PC-3 (cell line): ENCODE measurements at regions of chr21 and their contacts with region 1.

Region 1: DNA sequence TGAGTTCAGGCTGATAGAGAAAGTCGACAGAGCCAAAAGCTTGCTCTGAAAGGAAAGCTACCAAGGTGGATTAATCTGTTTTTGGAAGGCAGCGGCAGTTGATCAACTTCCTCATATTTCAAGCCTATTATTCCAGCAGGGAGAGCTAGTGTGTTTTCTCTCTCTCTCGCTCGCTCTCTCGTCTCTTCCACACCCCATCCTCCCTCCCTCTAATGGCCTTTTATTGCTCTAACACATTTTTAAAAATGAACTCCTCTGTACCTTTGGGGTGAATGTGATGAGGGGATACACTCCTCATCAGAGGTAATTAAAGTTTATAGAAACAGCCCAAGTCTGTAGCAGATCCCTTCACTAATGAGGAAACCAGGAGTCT is 126.4 kb downstream of the CLIC6 start:
- DNase-seq: no peak
- ATAC-seq: peak; percentile 4; the same call in 1 of the 2 replicates
- H3K4me3 ChIP-seq: no peak overlapping the region
- H3K27ac ChIP-seq: peak overlapping the region; percentile 89
- H3K4me1 ChIP-seq: peaks cover 46% of the 10 kb centered on the region
- H3K27me3 ChIP-seq: no peaks in the 10 kb centered on the region
- CTCF ChIP-seq: peak; percentile 39

Region 2: GRCh38 chr21:34693192-34693810 is 101.9 kb before region 1 on chr21:
- CTCF ChIA-PET with region 1: no interaction called
- POLR2A ChIA-PET with region 1: interaction called, 3 read pairs
- intact Hi-C with region 1: loop called (anchors 2 kb)
- DNase-seq: peak; percentile 83
- ATAC-seq: peak; percentile 65
- H3K4me3 ChIP-seq: no peak overlapping the region
- H3K27ac ChIP-seq: no peak overlapping the region
- H3K4me1 ChIP-seq: peaks cover 38% of the 10 kb centered on the region
- H3K27me3 ChIP-seq: no peaks in the 10 kb centered on the region
- CTCF ChIP-seq: peak; percentile 93

Region 3: GRCh38 chr21:34726627-34727337 is 68.4 kb before region 1 on chr21:
- CTCF ChIA-PET with region 1: no interaction called
- POLR2A ChIA-PET with region 1: no interaction called
- intact Hi-C with region 1: no loop called
- DNase-seq: peak; percentile 45
- ATAC-seq: no peak
- H3K4me3 ChIP-seq: no peak overlapping the region
- H3K27ac ChIP-seq: no peak overlapping the region
- H3K4me1 ChIP-seq: peaks cover 9% of the 10 kb centered on the region; the same call in 1 of the 2 replicates
- H3K27me3 ChIP-seq: no peaks in the 10 kb centered on the region
- CTCF ChIP-seq: no peak

Region 4: DNA sequence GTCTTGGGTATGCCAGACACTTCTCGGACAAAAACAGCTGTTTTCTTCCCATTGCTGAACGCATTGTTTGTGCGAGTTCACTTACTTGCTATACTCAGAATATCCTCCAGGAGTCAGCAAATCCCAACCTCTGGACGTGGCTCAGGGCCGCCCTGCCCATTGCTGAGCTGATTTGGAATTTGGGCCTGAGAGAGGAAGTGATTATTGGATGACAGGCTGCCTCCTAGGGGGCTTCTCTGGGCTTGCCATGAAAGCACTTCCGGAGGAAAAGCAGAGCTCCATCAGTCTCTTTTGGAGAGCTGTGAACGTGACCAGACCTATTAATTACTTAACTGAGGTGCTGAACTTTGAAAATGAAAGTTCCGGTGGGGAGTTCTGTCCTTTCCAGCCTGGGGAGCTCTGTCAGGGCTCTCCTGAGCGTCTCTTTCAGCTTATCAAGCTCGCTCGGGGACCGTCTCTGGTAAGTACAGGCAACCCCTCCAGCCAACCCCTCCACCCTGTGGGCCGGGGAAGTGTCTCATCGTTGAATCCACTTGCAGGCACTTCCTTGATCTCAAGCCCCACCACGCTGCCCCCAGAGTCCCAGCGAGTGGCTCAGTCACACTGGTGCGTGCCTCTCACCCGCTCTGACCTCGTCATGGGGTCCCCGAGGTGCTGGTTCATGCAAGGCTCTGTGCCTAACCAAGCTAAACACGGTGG is 49.5 kb before region 1 on chr21:
- CTCF ChIA-PET with region 1: interaction called, 23 read pairs
- POLR2A ChIA-PET with region 1: interaction called, 6 read pairs
- intact Hi-C with region 1: loop called (anchors 1 kb)
- DNase-seq: peak; percentile 93
- ATAC-seq: peak; percentile 68
- H3K4me3 ChIP-seq: no peak overlapping the region
- H3K27ac ChIP-seq: no peak overlapping the region
- H3K4me1 ChIP-seq: peaks cover 31% of the 10 kb centered on the region
- H3K27me3 ChIP-seq: no peaks in the 10 kb centered on the region
- CTCF ChIP-seq: peak; percentile 97

Region 5: DNA sequence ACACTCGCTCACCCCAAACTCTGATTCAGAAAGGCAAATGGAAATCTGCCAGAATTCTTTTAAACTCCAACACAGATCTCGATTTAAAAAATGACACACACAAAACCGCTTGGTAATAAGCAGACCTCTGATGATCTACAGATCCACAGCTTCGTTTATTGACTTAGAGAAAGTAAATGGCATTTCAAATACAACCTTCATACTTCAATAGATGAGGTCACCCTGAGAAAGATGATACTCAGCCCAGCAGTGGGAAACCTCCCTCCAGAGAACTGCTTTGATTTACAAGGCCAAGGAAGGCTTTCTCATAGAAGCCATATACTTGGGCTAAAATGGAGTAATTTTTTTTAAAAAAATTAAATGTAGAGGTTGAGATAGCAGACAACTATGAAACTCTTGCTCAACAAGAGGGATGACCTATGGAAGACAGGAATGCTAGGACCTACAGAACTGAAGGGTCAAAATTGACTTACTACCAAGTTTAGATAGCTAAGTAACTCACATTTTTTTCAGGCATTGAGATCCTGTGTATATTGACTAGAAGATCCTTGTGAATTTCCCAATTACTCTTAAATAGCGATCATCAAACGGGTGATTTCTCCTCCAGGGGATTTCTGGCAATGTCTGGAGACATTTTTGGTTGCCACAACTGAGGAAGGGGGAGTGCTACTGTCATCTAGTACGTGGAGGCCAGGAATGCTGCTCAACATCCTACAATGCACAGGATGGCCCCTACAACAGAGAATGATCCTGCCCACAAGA is 17.5 kb after region 1 on chr21:
- CTCF ChIA-PET with region 1: no interaction called
- POLR2A ChIA-PET with region 1: interaction called, 3 read pairs
- intact Hi-C with region 1: loop called (anchors 2 kb)
- DNase-seq: peak; percentile 93
- ATAC-seq: peak; percentile 53
- H3K4me3 ChIP-seq: no peak overlapping the region
- H3K27ac ChIP-seq: peak overlapping the region; percentile 96
- H3K4me1 ChIP-seq: peaks cover 80% of the 10 kb centered on the region
- H3K27me3 ChIP-seq: no peaks in the 10 kb centered on the region
- CTCF ChIP-seq: no peak

Region 6: GRCh38 chr21:34836103-34836932 is 41.2 kb after region 1 on chr21:
- CTCF ChIA-PET with region 1: interaction called, 4 read pairs
- POLR2A ChIA-PET with region 1: interaction called, 3 read pairs
- intact Hi-C with region 1: loop called (anchors 2 kb)
- DNase-seq: peak; percentile 99
- ATAC-seq: peak; percentile 94
- H3K4me3 ChIP-seq: peak overlapping the region; percentile 7; the same call in 1 of the 2 replicates
- H3K27ac ChIP-seq: peak overlapping the region; percentile 88
- H3K4me1 ChIP-seq: peaks cover 35% of the 10 kb centered on the region
- H3K27me3 ChIP-seq: no peaks in the 10 kb centered on the region
- CTCF ChIP-seq: no peak